Naive thymus-derived CD4-positive, alpha-beta T cell (primary cell): ENCODE measurements at regions of chr13 and their contacts with region 1.

Region 1: DNA sequence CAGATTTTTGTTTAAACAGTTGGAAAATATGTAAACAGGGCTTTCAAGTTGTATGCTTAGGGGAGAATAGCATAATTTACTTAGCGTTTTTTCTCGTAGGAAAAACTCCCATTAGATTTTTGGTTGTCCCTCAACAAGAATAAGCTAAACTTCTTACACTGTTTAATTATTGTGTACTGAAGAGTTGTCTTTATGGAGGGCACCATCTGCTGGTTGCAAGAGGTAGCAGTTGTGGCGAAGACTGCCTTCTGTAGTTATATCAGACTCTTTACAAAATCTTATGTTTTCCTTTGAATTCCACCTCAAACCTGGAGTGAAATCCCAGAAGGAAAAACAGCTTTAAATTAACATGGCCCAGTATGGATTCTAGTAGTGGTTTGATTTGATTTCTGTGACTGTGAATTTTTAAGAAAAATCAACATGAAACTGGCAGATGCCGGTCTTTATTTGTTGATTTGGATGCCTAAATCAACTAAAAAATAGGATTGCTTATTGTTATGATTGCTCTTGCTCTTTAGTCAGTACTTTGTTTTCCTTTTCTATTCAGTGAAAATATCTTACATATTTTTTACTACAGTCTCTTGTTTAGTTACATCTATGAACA is 53.4 kb downstream of the PDS5B start:
- DNase-seq: peak in 7 of 9 donors; percentile 40 to 60 (median 53)
- ATAC-seq: peak; percentile 95
- H3K4me3 ChIP-seq: no peak overlapping the region
- H3K4me3 Mint-ChIP-seq: no peak overlapping the region
- H3K27ac ChIP-seq: no peak overlapping the region
- H3K27ac Mint-ChIP-seq: no peak overlapping the region
- H3K4me1 ChIP-seq: peaks cover 0 to 12% of the 10 kb centered on the region in 2 donors
- H3K4me1 Mint-ChIP-seq: peaks cover 11 to 43% (median 32%) of the 10 kb centered on the region in 7 donors
- H3K27me3 ChIP-seq: no peaks in the 10 kb centered on the region
- H3K27me3 Mint-ChIP-seq: no peaks in the 10 kb centered on the region

Region 2: DNA sequence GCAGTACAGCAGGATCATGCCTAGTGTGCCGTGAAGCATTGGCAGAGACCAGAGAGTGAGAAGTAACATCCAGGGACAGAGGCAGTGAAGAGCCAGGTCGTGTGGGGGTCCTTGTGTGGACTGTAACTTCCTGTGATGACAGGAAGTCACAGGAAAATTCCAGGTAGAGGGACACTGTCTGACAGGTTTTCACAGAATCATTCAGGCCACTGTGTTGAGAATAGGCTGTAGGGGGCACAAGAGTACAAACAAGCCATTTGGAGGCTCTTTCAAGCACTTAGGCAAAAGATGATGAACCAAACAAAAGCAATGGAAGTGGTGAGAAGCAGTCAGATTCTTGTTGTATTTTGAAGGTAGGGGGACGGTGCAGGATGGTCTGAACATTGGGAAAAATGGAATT is 258.1 kb before region 1 on chr13:
- CTCF ChIA-PET with region 1: no interaction called
- POLR2A ChIA-PET with region 1: no interaction called
- intact Hi-C with region 1: loop called (anchors 1 to 5 kb)
- DNase-seq: peak in 6 of 9 donors; percentile 5 to 41 (median 24)
- ATAC-seq: peak; percentile 73
- H3K4me3 ChIP-seq: no peak overlapping the region
- H3K4me3 Mint-ChIP-seq: no peak overlapping the region
- H3K27ac ChIP-seq: no peak overlapping the region
- H3K27ac Mint-ChIP-seq: no peak overlapping the region
- H3K4me1 ChIP-seq: no peaks in the 10 kb centered on the region
- H3K4me1 Mint-ChIP-seq: peaks cover 0 to under 1% (median 0%) of the 10 kb centered on the region in 7 donors
- H3K27me3 ChIP-seq: no peaks in the 10 kb centered on the region
- H3K27me3 Mint-ChIP-seq: no peaks in the 10 kb centered on the region

Region 3: GRCh38 chr13:32472194-32472621 is 167.4 kb before region 1 on chr13:
- CTCF ChIA-PET with region 1: no interaction called
- POLR2A ChIA-PET with region 1: no interaction called
- intact Hi-C with region 1: loop called in 1 of 2 experiments (anchors 5 kb)
- DNase-seq: no peak
- ATAC-seq: no peak
- H3K4me3 ChIP-seq: no peak overlapping the region
- H3K4me3 Mint-ChIP-seq: no peak overlapping the region
- H3K27ac ChIP-seq: no peak overlapping the region
- H3K27ac Mint-ChIP-seq: peak overlapping the region in 2 of 9 donors; percentile 41 to 64
- H3K4me1 ChIP-seq: no peaks in the 10 kb centered on the region
- H3K4me1 Mint-ChIP-seq: peaks cover 0 to 17% (median 0%) of the 10 kb centered on the region in 7 donors
- H3K27me3 ChIP-seq: no peaks in the 10 kb centered on the region
- H3K27me3 Mint-ChIP-seq: no peaks in the 10 kb centered on the region

Region 4: GRCh38 chr13:32581177-32581786 is 58.3 kb before region 1 on chr13:
- CTCF ChIA-PET with region 1: interaction called, 11 read pairs
- POLR2A ChIA-PET with region 1: interaction called, 6 read pairs
- intact Hi-C with region 1: loop called (anchors 1 kb)
- DNase-seq: peak in 6 of 9 donors; percentile 5 to 37 (median 22)
- ATAC-seq: no peak
- H3K4me3 ChIP-seq: no peak overlapping the region
- H3K4me3 Mint-ChIP-seq: no peak overlapping the region
- H3K27ac ChIP-seq: no peak overlapping the region
- H3K27ac Mint-ChIP-seq: no peak overlapping the region
- H3K4me1 ChIP-seq: peaks cover 4 to 5% of the 10 kb centered on the region in 2 donors
- H3K4me1 Mint-ChIP-seq: peaks cover 6 to 10% (median 9%) of the 10 kb centered on the region in 7 donors
- H3K27me3 ChIP-seq: no peaks in the 10 kb centered on the region
- H3K27me3 Mint-ChIP-seq: peaks cover 0 to 22% (median 0%) of the 10 kb centered on the region in 5 donors

Region 5: DNA sequence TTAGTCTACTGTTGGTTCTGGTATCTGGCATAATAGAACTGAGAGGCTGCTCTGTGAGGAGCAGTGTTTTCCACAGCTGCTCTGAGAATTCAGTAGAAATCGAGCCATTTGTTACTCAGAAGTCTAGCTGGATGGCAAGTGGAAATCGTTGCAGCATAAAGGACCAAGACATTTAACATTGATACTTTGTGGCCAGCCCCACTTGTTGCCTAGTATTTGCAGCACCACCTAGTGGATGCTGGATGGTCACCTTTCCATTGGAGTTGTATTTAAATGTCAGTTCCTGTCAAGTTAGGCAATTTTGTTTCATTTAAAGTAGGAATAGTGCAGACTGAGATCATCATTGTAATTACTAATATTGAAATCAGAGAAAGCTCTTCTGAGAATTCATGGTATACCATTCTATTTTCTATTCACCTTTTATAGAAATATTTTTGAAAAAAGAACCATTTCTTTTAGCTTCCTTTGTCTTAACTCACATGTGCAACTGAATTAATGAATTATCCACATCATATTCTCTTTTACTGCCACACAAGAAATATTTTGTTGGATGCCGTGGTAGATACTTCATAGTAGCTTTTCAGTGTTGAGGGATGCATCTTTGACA is 11.2 kb after region 1 on chr13:
- CTCF ChIA-PET with region 1: interaction called, 9 read pairs
- POLR2A ChIA-PET with region 1: no interaction called
- intact Hi-C with region 1: loop called in 1 of 2 experiments (anchors 1 kb)
- DNase-seq: peak in 8 of 9 donors; percentile 16 to 55 (median 41)
- ATAC-seq: peak; percentile 91
- H3K4me3 ChIP-seq: no peak overlapping the region
- H3K4me3 Mint-ChIP-seq: no peak overlapping the region
- H3K27ac ChIP-seq: no peak overlapping the region
- H3K27ac Mint-ChIP-seq: peak overlapping the region in 1 of 9 donors; percentile 21
- H3K4me1 ChIP-seq: peaks cover 0 to 10% of the 10 kb centered on the region in 2 donors
- H3K4me1 Mint-ChIP-seq: peaks cover 23 to 55% (median 40%) of the 10 kb centered on the region in 7 donors
- H3K27me3 ChIP-seq: no peaks in the 10 kb centered on the region
- H3K27me3 Mint-ChIP-seq: no peaks in the 10 kb centered on the region

Region 6: GRCh38 chr13:33017323-33017929 is 377.8 kb after region 1 on chr13:
- CTCF ChIA-PET with region 1: no interaction called
- POLR2A ChIA-PET with region 1: no interaction called
- intact Hi-C with region 1: loop called in 1 of 2 experiments (anchors 5 kb)
- DNase-seq: peak in 6 of 9 donors; percentile 6 to 47 (median 18)
- ATAC-seq: peak; percentile 80
- H3K4me3 ChIP-seq: peak overlapping the region; percentile 30
- H3K4me3 Mint-ChIP-seq: peak overlapping the region; percentile 37 to 81 (median 73)
- H3K27ac ChIP-seq: no peak overlapping the region
- H3K27ac Mint-ChIP-seq: peak overlapping the region in 2 of 9 donors; percentile 49 to 66
- H3K4me1 ChIP-seq: peaks cover 3 to 7% of the 10 kb centered on the region in 2 donors
- H3K4me1 Mint-ChIP-seq: peaks cover 10 to 21% (median 15%) of the 10 kb centered on the region in 7 donors
- H3K27me3 ChIP-seq: peaks cover 4 to 7% of the 10 kb centered on the region in 2 donors
- H3K27me3 Mint-ChIP-seq: peaks cover 65 to 83% (median 71%) of the 10 kb centered on the region in 5 donors